Psoas muscle (tissue), 8 donors: ENCODE measurements at regions of chr3 and their contacts with region 1.

Region 1: DNA sequence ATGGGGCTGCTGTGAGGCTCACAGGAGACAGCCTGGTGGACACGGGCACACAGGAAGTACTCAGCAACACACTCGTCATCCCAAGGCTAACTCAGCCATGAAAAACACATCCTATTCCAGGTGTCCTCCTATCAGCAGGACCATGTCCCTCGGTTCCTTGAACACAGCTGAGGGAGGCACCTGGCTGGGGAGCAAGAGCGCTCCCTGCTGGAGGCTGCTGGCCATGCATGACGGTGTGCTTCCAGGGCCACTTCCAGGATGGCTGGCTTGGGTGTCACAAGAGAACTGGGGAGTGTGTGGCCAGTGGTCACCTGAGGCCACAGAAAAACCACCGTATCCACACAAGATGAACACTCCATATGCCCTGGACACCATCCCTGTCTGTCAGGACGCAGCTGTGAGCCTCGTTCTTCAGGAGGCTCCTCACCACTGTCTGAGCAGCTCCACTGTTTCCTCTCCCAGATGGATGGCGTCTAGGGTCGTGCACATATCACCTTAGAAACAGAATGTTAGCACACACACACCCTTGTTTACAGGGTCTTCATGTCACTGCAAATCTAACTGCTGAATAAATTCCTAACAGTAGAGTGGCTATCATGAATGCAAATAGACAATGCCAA is 31.0 kb downstream of the POC1A start:
- DNase-seq: peak; percentile 67 to 84
- ATAC-seq: peak; percentile 89 to 96 (median 92)
- H3K4me3 ChIP-seq: no peak overlapping the region
- H3K27ac ChIP-seq: no peak overlapping the region
- H3K4me1 ChIP-seq: no peaks in the 10 kb centered on the region
- H3K27me3 ChIP-seq: no peaks in the 10 kb centered on the region
- CTCF ChIP-seq: peak; percentile 94

Region 2: GRCh38 chr3:51982782-51983577 is 140.2 kb before region 1 on chr3 and contains the start of gene ACY1:
- intact Hi-C with region 1: no loop called
- DNase-seq: peak; percentile 92 to 95
- ATAC-seq: peak; percentile 89 to 94 (median 92)
- H3K4me3 ChIP-seq: peak within 1 kb of the TSS; percentile 84
- H3K27ac ChIP-seq: peak within 1 kb of the TSS; percentile 96
- H3K4me1 ChIP-seq: peaks cover 20% of the 10 kb centered on the region
- H3K27me3 ChIP-seq: no peaks in the 10 kb centered on the region
- CTCF ChIP-seq: no peak
- total RNA-seq, gene ACY1: 29.4 to 56.5 (median 38.5) TPM

Region 3: GRCh38 chr3:52001443-52001974 is 121.7 kb before region 1 on chr3:
- intact Hi-C with region 1: loop called (anchors 1 to 5 kb)
- DNase-seq: peak; percentile 77 to 89
- ATAC-seq: peak; percentile 81 to 86 (median 84)
- H3K4me3 ChIP-seq: no peak overlapping the region
- H3K27ac ChIP-seq: no peak overlapping the region
- H3K4me1 ChIP-seq: peaks cover 26% of the 10 kb centered on the region
- H3K27me3 ChIP-seq: no peaks in the 10 kb centered on the region
- CTCF ChIP-seq: peak; percentile 92

Region 4: GRCh38 chr3:52043750-52044149 is 79.5 kb before region 1 on chr3:
- intact Hi-C with region 1: loop called in 1 of 2 experiments (anchors 2 kb)
- DNase-seq: no peak
- ATAC-seq: no peak
- H3K4me3 ChIP-seq: no peak overlapping the region
- H3K27ac ChIP-seq: no peak overlapping the region
- H3K4me1 ChIP-seq: peaks cover 31% of the 10 kb centered on the region
- H3K27me3 ChIP-seq: no peaks in the 10 kb centered on the region
- CTCF ChIP-seq: no peak

Region 5: GRCh38 chr3:52070724-52071621 is 52.2 kb before region 1 on chr3:
- intact Hi-C with region 1: loop called in 1 of 2 experiments (anchors 5 kb)
- DNase-seq: peak; percentile 55 to 87
- ATAC-seq: peak; percentile 90 to 97 (median 96)
- H3K4me3 ChIP-seq: peak overlapping the region; percentile 9
- H3K27ac ChIP-seq: peak overlapping the region; percentile 91
- H3K4me1 ChIP-seq: peaks cover 22% of the 10 kb centered on the region
- H3K27me3 ChIP-seq: no peaks in the 10 kb centered on the region
- CTCF ChIP-seq: peak; percentile 31

Region 6: GRCh38 chr3:52144034-52144795 is 21.0 kb after region 1 on chr3:
- intact Hi-C with region 1: loop called in 1 of 2 experiments (anchors 1 kb)
- DNase-seq: peak; percentile 83 to 90
- ATAC-seq: peak; percentile 75 to 83 (median 79)
- H3K4me3 ChIP-seq: no peak overlapping the region
- H3K27ac ChIP-seq: no peak overlapping the region
- H3K4me1 ChIP-seq: peaks cover 19% of the 10 kb centered on the region
- H3K27me3 ChIP-seq: no peaks in the 10 kb centered on the region
- CTCF ChIP-seq: peak; percentile 97

Region 7: DNA sequence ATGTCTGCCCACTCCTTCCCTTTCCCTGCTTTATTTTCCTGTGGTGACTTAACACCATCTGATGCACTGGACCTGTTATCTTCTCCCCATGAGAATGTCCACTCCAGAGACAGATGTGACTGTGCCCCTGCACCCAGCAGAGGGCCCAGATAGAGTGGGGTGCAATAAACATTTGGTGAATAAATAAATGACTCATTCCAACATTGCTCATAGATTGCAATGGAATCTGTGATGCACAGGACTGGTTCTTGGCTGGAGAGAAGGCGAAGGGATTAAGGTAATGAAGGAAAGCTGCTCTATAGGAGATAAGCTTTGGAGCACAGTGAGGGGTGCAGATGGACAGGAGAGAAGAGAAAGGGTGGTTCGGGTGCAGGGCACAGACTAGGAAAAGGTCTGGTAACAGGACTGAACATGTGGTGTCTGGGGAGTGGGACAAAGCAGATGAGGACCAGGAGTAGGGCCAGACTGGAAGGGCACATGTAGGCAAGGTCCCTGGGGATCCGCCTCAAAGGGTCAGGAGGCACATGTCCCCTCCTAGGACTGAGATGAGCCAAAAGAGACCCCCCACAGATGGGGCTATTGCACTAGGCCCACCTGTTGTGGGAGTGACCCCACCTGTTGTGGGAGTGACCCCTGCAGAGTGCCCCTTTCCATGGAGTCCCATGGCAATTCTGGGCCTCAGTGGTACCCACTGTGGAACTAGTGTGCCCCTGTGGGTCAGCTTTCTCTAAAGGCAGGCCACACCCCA is 48.5 kb after region 1 on chr3:
- intact Hi-C with region 1: no loop called
- DNase-seq: no peak
- ATAC-seq: no peak
- H3K4me3 ChIP-seq: no peak overlapping the region
- H3K27ac ChIP-seq: no peak overlapping the region
- H3K4me1 ChIP-seq: no peaks in the 10 kb centered on the region
- H3K27me3 ChIP-seq: no peaks in the 10 kb centered on the region
- CTCF ChIP-seq: no peak